ENCODE measurements at regions of chr5 and their contacts with region 1.

Region 1: GRCh38 chr5:172714491-172715421 is 56.2 kb downstream of the DUSP1 start:
- DNase-seq: peak; percentile 91 to 93
- ATAC-seq: peak; percentile 83
- H3K4me3 ChIP-seq: no peak overlapping the region
- H3K27ac ChIP-seq: peak overlapping the region in 1 of 2 donors; percentile 53
- H3K4me1 ChIP-seq: peaks cover 0 to 2% of the 10 kb centered on the region in 2 donors
- H3K27me3 ChIP-seq: no peaks in the 10 kb centered on the region

Region 2: DNA sequence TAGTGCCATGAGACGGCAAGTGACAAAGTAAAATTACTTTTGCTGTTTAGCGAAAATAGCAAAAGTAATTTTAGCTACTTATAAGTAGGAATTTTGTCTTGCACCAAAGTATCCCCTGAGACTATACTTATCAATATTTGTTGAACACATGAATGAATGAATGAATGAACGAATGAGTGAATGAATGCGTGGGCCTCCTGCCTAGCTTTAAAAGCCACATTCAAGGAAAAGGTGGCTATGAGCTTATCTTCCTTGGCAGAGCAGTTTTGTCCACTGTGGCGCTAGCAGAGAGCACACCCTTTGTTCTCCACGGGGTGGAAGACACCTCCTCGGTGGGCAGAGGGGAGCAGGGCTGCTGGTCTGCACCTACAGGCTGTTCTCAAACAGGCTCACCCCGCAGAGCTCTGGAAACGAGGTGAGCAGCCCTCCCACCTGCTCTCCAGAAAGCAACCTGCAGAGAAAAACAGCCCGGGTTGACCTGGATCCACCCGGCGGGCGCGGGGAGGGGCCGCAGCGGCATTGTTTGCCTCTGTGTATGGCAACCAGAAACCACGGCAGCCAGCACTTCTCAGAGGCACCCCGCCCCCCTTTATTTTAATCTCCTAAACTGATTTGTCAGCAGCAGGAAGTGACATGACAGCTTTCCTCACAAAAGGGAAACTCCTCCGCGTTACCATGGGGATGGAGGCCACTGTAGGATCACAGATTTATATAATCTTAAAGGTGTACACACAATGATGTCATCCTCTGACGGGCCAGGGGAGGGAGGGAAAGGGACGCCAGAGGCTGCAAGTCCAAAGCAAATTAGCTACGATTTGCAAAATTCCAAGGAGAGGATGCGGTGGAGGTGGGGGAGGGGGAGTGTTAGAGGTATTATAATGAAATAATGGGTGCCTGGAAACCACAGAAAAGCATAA is 50.4 kb after region 1 on chr5:
- intact Hi-C with region 1: loop called in 1 of 2 experiments (anchors 2 kb)
- DNase-seq: peak; percentile 96 to 97
- ATAC-seq: peak; percentile 75
- H3K4me3 ChIP-seq: no peak overlapping the region
- H3K27ac ChIP-seq: peak overlapping the region; percentile 88 to 99
- H3K4me1 ChIP-seq: no peaks in the 10 kb centered on the region
- H3K27me3 ChIP-seq: no peaks in the 10 kb centered on the region

Region 3: GRCh38 chr5:172878933-172879752 is 164.4 kb after region 1 on chr5:
- intact Hi-C with region 1: loop called in 1 of 2 experiments (anchors 5 kb)
- DNase-seq: peak; percentile 72 to 89
- ATAC-seq: peak; percentile 73
- H3K4me3 ChIP-seq: no peak overlapping the region
- H3K27ac ChIP-seq: peak overlapping the region; percentile 98 to 100
- H3K4me1 ChIP-seq: peaks cover 0 to 3% of the 10 kb centered on the region in 2 donors
- H3K27me3 ChIP-seq: no peaks in the 10 kb centered on the region

Region 4: DNA sequence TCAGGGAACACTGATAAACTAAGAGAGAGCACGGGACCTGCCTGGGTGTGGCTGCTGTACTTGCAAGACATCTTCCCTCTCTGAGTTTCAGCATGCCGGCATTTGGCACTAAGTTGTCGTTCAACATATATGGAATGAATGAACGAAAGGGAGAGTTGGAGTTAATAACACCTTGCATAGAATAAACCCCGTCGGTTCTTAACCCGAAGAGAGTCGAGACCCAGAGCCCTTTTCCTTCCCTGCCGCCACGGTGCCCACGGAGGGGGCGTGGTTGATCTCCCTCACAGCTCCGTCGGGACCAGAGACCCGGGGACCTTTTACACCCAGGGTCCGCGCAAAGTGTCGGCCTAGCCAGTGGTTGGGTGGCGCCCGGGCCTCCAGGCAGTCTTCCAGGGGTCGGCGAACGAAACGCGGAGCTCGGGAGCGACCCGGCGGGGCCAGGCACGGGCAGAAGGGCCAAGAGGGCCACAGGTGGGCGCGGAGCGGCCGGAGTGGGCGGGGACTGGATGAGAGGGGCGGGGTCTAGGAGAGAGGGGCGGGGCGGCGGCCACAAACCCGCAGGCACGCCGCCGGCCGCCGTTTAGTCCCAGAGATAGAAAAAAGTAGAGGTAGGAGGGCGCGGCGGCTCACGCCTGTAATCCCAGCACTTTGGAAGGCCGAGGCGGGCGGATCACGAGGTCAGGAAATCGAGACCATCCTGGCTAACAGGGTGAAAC is 243.7 kb after region 1 on chr5:
- intact Hi-C with region 1: loop called (anchors 5 kb)
- DNase-seq: peak; percentile 80 to 90
- ATAC-seq: peak; percentile 86
- H3K4me3 ChIP-seq: no peak overlapping the region
- H3K27ac ChIP-seq: peak overlapping the region; percentile 29 to 61
- H3K4me1 ChIP-seq: no peaks in the 10 kb centered on the region
- H3K27me3 ChIP-seq: no peaks in the 10 kb centered on the region

Region 5: DNA sequence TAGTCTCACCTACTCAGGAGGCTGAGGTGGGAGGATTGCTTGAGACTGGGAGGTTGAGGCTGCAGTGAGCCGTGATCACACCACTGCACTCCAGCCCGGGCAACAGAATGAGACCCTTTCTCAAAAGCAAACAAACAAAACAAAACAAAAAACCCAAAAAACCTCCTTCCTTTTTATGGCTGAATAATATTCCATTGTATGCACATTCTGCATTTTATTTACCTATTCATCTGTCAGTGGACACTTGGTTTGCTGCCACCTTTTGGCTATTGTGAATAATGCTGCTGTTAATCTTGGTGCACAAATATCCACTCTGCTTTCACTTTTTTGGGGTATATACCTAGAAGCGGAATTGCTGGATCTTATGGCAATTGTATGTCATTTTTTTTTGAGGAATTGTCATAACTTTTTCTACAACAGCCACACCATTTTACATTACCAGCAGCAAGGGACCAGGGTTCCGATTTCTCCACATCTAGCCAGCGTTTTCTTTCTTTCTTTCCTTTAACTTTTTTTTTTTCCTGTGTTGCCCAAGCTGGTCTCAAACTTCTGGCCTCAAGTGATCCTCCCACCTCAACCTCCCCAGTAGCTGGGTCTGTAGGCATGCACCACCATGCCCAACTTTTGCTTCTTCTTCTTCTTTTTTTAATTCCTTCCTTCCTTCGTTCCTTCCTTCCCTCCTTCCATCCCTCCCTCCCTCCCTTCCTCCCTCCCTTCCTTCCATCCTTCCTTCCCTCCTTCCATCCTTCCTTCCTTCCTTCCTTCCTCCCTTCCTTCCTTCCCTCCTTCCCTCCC is 489.6 kb after region 1 on chr5:
- intact Hi-C with region 1: loop called in 1 of 2 experiments (anchors 10 kb)
- DNase-seq: no peak
- ATAC-seq: no peak
- H3K4me3 ChIP-seq: no peak overlapping the region
- H3K27ac ChIP-seq: no peak overlapping the region
- H3K4me1 ChIP-seq: no peaks in the 10 kb centered on the region
- H3K27me3 ChIP-seq: peaks cover 0 to 4% of the 10 kb centered on the region in 2 donors

Measured in aorta (tissue), 5 donors.